ENCODE measurements at regions of chr6 and their contacts with region 1.

Region 1: GRCh38 chr6:99241905-99242534 is 107.5 kb downstream of the FAXC start:
- DNase-seq: no peak
- ATAC-seq: peak; percentile 51
- H3K4me3 ChIP-seq: no peak overlapping the region
- H3K27ac ChIP-seq: no peak overlapping the region
- H3K4me1 ChIP-seq: no peaks in the 10 kb centered on the region
- H3K27me3 ChIP-seq: no peaks in the 10 kb centered on the region; the same call in 1 of the 2 replicates
- CTCF ChIP-seq: peak; percentile 69

Region 2: DNA sequence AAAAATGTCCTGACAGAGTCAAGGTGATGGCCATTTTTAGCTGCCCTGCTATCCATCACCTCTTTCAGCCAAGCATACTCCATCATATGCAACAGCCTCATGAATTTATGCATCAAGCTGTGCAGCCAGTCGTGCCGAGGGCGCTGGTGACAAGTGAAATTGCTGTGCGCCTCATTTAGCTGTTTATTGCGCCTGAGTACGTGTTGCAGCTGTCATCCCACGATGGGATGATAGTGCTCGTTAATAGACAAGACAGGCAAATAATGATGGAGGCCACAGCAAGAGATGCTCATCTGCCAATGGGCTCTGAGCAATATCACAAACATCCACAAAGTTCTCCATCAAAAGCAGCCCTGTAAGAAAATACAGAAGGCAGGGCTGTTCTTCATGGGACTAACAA is 970.0 kb before region 1 on chr6:
- CTCF ChIA-PET with region 1: no interaction called
- POLR2A ChIA-PET with region 1: interaction called, 18 read pairs
- in situ Hi-C with region 1: no loop called
- intact Hi-C with region 1: no loop called
- DNase-seq: no peak
- ATAC-seq: no peak
- H3K4me3 ChIP-seq: no peak overlapping the region
- H3K27ac ChIP-seq: no peak overlapping the region
- H3K4me1 ChIP-seq: no peaks in the 10 kb centered on the region
- H3K27me3 ChIP-seq: no peaks in the 10 kb centered on the region
- CTCF ChIP-seq: no peak

Region 3: DNA sequence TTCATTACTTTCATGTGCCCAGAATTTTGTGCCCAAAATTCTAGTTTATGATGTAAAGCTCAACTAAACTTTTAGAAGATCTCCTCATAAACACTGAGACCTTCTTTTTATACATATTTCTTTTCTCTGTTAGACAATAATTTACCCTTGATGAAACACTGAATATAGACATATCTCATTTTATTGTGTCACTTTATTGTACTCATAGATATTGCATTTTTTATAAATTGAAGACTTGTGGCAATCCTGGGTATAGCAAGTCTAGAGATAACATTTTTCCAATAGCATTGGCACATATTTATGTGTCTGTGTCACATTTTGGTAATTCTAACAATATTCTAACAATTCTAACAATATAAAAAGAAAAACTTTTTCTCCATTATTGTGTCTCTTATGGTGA is 482.6 kb before region 1 on chr6:
- CTCF ChIA-PET with region 1: no interaction called
- POLR2A ChIA-PET with region 1: no interaction called
- in situ Hi-C with region 1: no loop called
- intact Hi-C with region 1: no loop called
- DNase-seq: no peak
- ATAC-seq: no peak
- H3K4me3 ChIP-seq: no peak overlapping the region
- H3K27ac ChIP-seq: no peak overlapping the region
- H3K4me1 ChIP-seq: no peaks in the 10 kb centered on the region
- H3K27me3 ChIP-seq: no peaks in the 10 kb centered on the region
- CTCF ChIP-seq: no peak

Region 4: DNA sequence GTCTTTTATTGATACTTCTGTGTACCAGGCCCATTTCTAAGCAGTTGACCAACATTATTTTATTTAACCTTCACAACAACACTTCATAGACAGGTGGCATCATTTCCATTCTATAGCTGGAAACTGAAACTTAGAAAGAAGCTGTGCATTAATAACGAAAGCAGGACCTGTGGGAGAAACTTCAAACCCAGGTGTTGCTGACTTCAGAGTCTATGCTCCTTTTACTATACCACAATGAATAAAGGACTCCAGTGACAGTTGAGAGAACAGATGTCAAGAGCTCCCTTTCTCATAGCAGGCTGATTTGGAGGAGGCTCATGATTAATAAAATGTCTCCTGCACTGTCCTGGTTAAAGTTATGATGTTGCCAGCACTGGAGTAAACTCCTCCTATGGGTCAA is 464.3 kb before region 1 on chr6:
- CTCF ChIA-PET with region 1: interaction called, 14 read pairs
- POLR2A ChIA-PET with region 1: no interaction called
- in situ Hi-C with region 1: no loop called
- intact Hi-C with region 1: no loop called
- DNase-seq: no peak
- ATAC-seq: no peak
- H3K4me3 ChIP-seq: no peak overlapping the region
- H3K27ac ChIP-seq: no peak overlapping the region
- H3K4me1 ChIP-seq: no peaks in the 10 kb centered on the region
- H3K27me3 ChIP-seq: peaks cover 5% of the 10 kb centered on the region
- CTCF ChIP-seq: no peak

Region 5: DNA sequence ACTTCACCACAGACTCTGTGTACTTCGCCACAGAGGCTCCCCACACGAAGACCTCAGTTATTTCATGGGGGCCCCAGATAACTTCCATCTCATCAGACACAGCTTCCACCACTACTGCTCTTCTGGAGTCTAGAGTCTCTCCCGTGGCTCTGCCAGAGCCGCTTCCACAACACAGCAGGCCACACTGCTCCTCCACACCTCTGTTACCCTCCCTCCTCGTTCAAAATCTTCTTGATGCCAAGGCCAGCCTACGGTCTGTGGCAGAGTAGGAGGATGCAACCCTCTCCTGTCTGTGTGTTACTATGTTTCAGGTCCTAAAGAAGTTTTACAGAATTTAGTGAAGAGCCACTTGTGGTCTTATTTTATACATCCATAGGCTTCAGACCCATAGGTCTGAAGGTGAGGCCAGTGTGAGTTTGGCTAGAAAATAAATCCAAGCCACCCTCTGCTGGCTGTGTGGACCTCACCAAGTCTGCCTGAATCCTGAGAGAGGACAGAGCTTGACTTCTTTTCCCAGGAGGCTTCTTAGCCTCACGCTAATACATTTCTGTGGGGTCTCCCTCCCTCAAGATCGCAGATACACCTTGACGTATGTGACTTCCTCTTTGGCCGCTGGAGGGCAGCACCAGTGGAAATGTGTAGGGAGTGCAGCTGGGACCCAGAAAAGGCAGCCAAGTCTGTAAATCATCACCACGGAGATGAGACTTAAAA is 90.2 kb before region 1 on chr6:
- CTCF ChIA-PET with region 1: no interaction called
- POLR2A ChIA-PET with region 1: no interaction called
- in situ Hi-C with region 1: no loop called
- intact Hi-C with region 1: loop called (anchors 5 kb)
- DNase-seq: peak; percentile 13
- ATAC-seq: peak; percentile 87
- H3K4me3 ChIP-seq: no peak overlapping the region
- H3K27ac ChIP-seq: no peak overlapping the region
- H3K4me1 ChIP-seq: no peaks in the 10 kb centered on the region
- H3K27me3 ChIP-seq: peaks cover 4% of the 10 kb centered on the region; the same call in 1 of the 2 replicates
- CTCF ChIP-seq: peak; percentile 86

Measured in Panc1 (cell line).